Common myeloid progenitor, CD34-positive (primary cell): ENCODE measurements at regions of chr16 and their contacts with region 1.

Region 1: DNA sequence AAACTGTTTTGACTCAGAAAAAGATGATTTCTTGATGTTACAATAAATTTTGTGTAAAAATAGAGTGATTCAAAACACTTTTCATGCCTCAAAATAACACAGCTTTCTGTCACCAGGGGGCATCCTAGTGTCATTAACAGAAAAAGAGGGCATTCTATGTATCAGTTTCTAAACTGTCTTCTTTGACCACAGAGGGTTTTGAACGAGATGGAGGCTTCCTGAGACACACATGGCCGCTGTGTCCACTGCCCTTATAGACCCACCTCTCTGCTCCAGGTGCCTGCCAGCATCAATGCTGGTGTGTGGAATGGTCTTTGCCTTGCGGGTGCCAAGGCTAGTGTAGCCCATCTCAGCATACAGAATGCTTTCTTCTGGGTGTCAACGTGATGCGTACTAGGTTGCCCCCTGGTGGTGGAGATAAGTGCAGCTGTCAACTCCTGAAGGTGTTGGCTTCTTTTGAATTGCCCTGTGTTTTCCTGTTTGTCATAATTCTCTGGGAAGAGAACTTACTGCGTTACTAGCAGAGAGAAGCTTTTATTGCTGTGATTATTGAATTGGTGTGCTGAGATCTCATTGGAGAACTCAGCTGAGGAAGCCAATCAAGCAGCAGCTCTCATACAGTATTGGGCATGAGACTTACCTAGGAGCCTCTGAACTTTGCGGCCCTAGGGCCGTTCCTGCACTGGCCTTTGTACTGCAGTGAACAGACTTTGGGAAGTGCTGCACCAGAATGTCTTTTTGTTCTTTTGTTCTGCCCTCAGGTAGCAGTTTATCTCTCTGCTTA is 38.6 kb downstream of the USP10 start:
- DNase-seq: peak; percentile 83 to 89 (median 85)
- H3K4me3 ChIP-seq: peak overlapping the region in 2 of 7 experiments; percentile 33 to 58
- H3K27ac ChIP-seq: peak overlapping the region in 1 of 2 experiments; percentile 4
- H3K4me1 ChIP-seq: peaks cover 0 to 50% (median 21%) of the 10 kb centered on the region in 4 experiments
- H3K27me3 ChIP-seq: no peaks in the 10 kb centered on the region

Region 2: GRCh38 chr16:84629580-84629979 is 108.9 kb before region 1 on chr16:
- CTCF ChIA-PET with region 1: interaction called, 34 read pairs
- POLR2A ChIA-PET with region 1: no interaction called
- DNase-seq: no peak
- H3K4me3 ChIP-seq: no peak overlapping the region
- H3K27ac ChIP-seq: no peak overlapping the region
- H3K4me1 ChIP-seq: peaks cover 0 to 20% (median 9%) of the 10 kb centered on the region in 4 experiments
- H3K27me3 ChIP-seq: no peaks in the 10 kb centered on the region

Region 3: GRCh38 chr16:84720177-84720579 is 18.3 kb before region 1 on chr16:
- CTCF ChIA-PET with region 1: interaction called, 37 read pairs
- POLR2A ChIA-PET with region 1: no interaction called
- DNase-seq: no peak
- H3K4me3 ChIP-seq: no peak overlapping the region
- H3K27ac ChIP-seq: no peak overlapping the region
- H3K4me1 ChIP-seq: peaks cover 0 to 35% (median 14%) of the 10 kb centered on the region in 4 experiments
- H3K27me3 ChIP-seq: no peaks in the 10 kb centered on the region

Region 4: GRCh38 chr16:84754353-84754856 is 16.0 kb after region 1 on chr16:
- CTCF ChIA-PET with region 1: interaction called, 78 read pairs
- POLR2A ChIA-PET with region 1: no interaction called
- DNase-seq: peak; percentile 88 to 93 (median 91)
- H3K4me3 ChIP-seq: peak overlapping the region in 2 of 7 experiments; percentile 34 to 43
- H3K27ac ChIP-seq: no peak overlapping the region
- H3K4me1 ChIP-seq: peaks cover 37 to 68% (median 49%) of the 10 kb centered on the region in 4 experiments
- H3K27me3 ChIP-seq: no peaks in the 10 kb centered on the region

Region 5: GRCh38 chr16:84785843-84786581 is 47.6 kb after region 1 on chr16:
- CTCF ChIA-PET with region 1: no interaction called
- POLR2A ChIA-PET with region 1: no interaction called
- DNase-seq: peak in 2 of 3 donors; percentile 44 to 58
- H3K4me3 ChIP-seq: no peak overlapping the region
- H3K27ac ChIP-seq: no peak overlapping the region
- H3K4me1 ChIP-seq: peaks cover 0 to 13% (median 4%) of the 10 kb centered on the region in 4 experiments
- H3K27me3 ChIP-seq: no peaks in the 10 kb centered on the region

Region 6: DNA sequence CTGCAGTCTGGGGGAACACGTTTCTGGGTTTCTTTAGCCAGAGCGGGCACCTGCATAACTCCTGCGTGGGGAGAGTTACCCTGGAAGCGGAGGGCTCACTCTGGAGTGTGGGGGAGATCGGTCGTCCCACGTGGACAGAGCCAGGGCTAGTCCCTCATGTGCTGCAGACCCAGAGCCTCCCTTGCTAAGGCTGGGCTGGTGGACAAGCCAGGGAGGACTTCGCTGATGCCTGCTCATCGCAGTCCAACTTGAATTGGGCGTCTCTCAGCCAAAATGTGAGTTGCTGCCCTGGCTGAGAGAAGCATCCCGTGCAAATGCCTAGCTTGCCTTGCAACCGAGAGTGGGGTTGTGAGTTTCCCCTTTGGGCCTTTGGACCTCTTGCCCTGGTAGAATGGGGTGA is 82.3 kb after region 1 on chr16:
- CTCF ChIA-PET with region 1: no interaction called
- POLR2A ChIA-PET with region 1: no interaction called
- DNase-seq: no peak
- H3K4me3 ChIP-seq: peak overlapping the region in 1 of 7 experiments; percentile 52
- H3K27ac ChIP-seq: no peak overlapping the region
- H3K4me1 ChIP-seq: peaks cover 0 to 12% (median 11%) of the 10 kb centered on the region in 4 experiments
- H3K27me3 ChIP-seq: peaks cover 0 to 49% (median 24%) of the 10 kb centered on the region in 5 experiments

Region 7: DNA sequence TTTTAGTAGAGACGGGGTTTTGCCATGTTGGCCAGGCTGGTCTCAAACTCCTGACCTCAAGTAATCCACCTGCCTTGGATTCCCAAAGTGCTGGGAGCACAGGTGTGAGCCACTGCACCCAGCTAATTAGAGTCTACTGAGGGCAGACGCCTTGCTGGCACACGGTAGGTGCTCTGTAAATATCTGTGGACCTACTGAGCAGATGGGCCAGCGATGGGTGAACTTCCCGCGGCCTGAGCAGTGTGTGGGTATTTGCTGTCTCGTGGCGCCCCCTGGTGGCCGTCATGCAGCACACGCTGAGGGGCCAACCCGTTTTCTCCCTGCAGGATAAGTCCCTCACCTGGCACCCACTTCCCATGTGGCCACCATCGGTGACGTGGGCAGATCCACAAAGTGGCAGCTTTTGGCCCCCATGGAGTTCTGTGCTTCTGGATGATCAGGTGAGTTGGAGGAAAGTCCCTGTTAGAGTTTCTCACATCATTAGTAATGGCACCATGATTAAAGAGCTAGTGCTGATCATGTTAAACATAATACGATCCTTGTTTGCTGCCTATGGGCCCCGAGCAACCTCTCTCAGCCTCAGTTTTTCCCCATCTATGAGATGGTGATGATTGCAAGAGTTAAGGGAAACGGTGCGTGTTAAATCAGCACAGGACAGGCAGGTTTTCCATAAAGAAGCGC is 232.1 kb after region 1 on chr16:
- CTCF ChIA-PET with region 1: interaction called, 28 read pairs
- POLR2A ChIA-PET with region 1: no interaction called
- DNase-seq: peak; percentile 80 to 88 (median 87)
- H3K4me3 ChIP-seq: no peak overlapping the region
- H3K27ac ChIP-seq: no peak overlapping the region
- H3K4me1 ChIP-seq: peaks cover 0 to 8% (median 2%) of the 10 kb centered on the region in 4 experiments
- H3K27me3 ChIP-seq: peaks cover 0 to 9% (median 2%) of the 10 kb centered on the region in 5 experiments

Region 8: GRCh38 chr16:85027349-85027957 is 289.0 kb after region 1 on chr16 and contains the start of gene KIAA0513:
- CTCF ChIA-PET with region 1: no interaction called
- POLR2A ChIA-PET with region 1: no interaction called
- DNase-seq: peak; percentile 91 to 95 (median 93)
- H3K4me3 ChIP-seq: peak within 1 kb of the TSS; percentile 46 to 88 (median 71)
- H3K27ac ChIP-seq: peak within 1 kb of the TSS; percentile 33 to 70
- H3K4me1 ChIP-seq: peaks cover 23 to 50% (median 40%) of the 10 kb centered on the region in 4 experiments
- H3K27me3 ChIP-seq: peaks cover 0 to 20% (median 4%) of the 10 kb centered on the region in 5 experiments

Region 9: DNA sequence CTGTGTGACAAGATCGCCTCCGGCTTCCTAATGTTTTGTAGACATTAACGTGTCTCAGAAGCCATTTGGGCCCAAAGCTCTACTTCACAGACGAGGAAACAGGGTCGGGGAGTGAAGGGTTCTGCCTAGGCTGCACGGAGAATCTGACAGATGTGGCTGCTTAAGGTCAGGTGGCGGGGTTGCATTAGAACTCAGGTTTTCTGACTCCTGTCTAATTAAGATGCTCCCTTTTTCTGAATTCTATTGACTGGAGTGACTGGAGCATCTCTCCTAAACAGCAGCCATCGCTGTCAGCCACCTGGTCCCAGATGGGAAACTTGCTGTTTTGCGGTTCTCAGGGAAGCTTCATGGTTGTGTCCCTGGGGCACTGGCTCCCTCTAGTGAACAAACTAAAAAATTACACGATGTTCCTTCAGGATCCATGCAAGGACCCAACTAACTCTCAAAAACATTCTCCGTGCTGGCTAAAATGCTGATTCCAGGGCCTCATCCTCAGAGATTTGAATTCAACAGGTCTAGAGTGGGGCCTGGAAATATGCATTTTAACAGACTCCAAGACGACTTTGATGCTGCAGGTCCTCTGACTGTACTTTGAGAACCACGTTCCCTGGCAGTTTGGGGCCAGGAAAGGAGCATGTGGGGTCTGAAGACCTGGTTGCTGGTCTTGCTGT is 1277.9 kb after region 1 on chr16:
- CTCF ChIA-PET with region 1: no interaction called
- POLR2A ChIA-PET with region 1: no interaction called
- DNase-seq: peak; percentile 59 to 65 (median 65)
- H3K4me3 ChIP-seq: no peak overlapping the region
- H3K27ac ChIP-seq: no peak overlapping the region
- H3K4me1 ChIP-seq: peaks cover 4 to 16% (median 14%) of the 10 kb centered on the region in 4 experiments
- H3K27me3 ChIP-seq: peaks cover 0 to 27% (median 5%) of the 10 kb centered on the region in 5 experiments